Left cardiac atrium (tissue), 4 donors: ENCODE measurements at regions of chr17 and their contacts with region 1.

Region 1: DNA sequence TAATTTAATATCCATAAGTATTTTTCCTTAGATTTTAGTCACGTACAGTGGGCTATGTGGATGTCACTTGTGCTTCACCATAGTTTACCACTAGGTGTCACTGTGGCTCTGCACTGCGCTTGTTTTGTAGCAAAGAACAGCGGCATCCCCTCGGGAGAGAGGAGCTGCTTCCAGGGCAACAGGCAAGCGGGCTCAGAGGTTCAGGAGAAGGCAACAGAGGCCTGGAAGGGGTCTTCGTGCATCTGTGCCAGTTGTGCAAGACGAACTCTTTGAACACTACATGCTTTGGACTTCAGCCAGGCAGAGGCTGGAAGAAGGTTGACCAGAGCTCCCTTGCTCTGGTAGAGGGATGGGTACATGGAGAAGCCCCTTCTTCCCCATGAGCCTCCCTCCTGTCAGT is 20.6 kb downstream of the CYB561 start:
- DNase-seq: peak; percentile 80
- ATAC-seq: peak; percentile 76 to 83

Region 2: GRCh38 chr17:63455417-63455816 is 29.9 kb after region 1 on chr17:
- intact Hi-C with region 1: no loop called
- DNase-seq: no peak
- ATAC-seq: no peak

Region 3: GRCh38 chr17:63478791-63479494 is 53.5 kb after region 1 on chr17:
- intact Hi-C with region 1: loop called (anchors 1 to 5 kb)
- DNase-seq: peak; percentile 83
- ATAC-seq: peak; percentile 70 to 84

Region 4: GRCh38 chr17:63611354-63611753 is 185.9 kb after region 1 on chr17:
- intact Hi-C with region 1: loop called (anchors 2 to 5 kb)
- DNase-seq: no peak
- ATAC-seq: no peak